PC-9 (cell line): ENCODE measurements at regions of chr16 and their contacts with region 1.

Region 1: DNA sequence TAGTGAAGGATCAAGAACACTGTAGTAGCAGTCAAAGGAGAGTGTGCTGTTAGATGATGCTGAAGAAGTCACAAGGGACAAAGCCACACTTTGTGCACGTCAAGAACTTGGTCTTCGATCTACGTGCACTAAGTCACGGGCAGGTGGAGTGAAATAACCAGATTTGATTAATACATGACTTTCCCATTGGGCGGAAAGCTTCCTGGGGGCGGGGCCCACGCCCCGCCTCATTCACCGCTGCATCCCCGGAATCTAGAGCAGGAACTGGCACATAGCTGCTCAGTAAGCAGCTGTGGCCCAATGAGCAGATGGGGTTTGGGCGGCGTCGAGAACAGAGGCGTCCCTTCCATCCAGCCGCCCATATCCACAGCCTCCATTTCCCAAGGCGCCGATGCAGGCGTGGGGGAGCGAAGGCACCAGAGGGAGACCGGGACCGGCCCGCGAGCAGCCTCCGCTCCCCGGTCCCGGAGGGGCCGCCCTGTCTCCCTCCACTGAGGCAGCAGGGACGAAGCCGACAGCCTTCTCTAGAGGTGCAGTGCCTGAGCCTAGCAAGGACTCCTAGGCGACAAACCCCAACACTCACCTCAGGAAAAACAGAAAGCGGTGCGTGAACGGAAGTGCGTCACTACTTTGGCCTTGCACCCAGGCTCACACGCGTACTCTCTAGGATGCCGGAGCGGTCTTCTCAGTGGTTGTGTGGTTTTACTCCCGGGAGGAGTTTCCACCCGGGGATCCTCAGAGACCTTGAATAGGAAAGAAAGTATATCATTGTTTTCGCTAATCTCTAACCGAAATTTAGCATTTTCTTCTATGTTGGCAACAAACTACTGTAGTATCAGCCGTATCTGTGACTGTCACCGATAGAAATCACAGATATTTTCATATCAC is 4.9 kb downstream of the ZNF19 start:
- DNase-seq: peak; percentile 72 to 79
- H3K4me3 ChIP-seq: peak overlapping the region; percentile 97
- H3K27ac ChIP-seq: peak overlapping the region; percentile 82
- H3K4me1 ChIP-seq: peaks cover 15% of the 10 kb centered on the region
- H3K27me3 ChIP-seq: no peaks in the 10 kb centered on the region
- CTCF ChIP-seq: no peak

Region 2: GRCh38 chr16:71172481-71173201 is 311.6 kb before region 1 on chr16:
- CTCF ChIA-PET with region 1: no interaction called
- POLR2A ChIA-PET with region 1: no interaction called
- intact Hi-C with region 1: no loop called
- DNase-seq: no peak
- H3K4me3 ChIP-seq: no peak overlapping the region
- H3K27ac ChIP-seq: no peak overlapping the region
- H3K4me1 ChIP-seq: no peaks in the 10 kb centered on the region
- H3K27me3 ChIP-seq: no peaks in the 10 kb centered on the region
- CTCF ChIP-seq: no peak

Region 3: GRCh38 chr16:71461686-71462648 is 22.3 kb before region 1 on chr16 and contains the start of gene ZNF23:
- CTCF ChIA-PET with region 1: interaction called, 3 read pairs
- POLR2A ChIA-PET with region 1: interaction called, 6 read pairs
- intact Hi-C with region 1: loop called (anchors 2 kb)
- DNase-seq: peak; percentile 48 to 74
- H3K4me3 ChIP-seq: peak within 1 kb of the TSS; percentile 97
- H3K27ac ChIP-seq: peak within 1 kb of the TSS; percentile 23; the same call in 1 of the 2 replicates
- H3K4me1 ChIP-seq: peaks cover 16% of the 10 kb centered on the region
- H3K27me3 ChIP-seq: no peaks in the 10 kb centered on the region
- CTCF ChIP-seq: peak; percentile 30; the same call in 1 of the 2 replicates
- total RNA-seq, gene ZNF23: 6.9 and 7.9 TPM in 2 replicates